Right ventricle myocardium superior (tissue), 1 donor: ENCODE measurements at regions of chr2 and their contacts with region 1.

Region 1: DNA sequence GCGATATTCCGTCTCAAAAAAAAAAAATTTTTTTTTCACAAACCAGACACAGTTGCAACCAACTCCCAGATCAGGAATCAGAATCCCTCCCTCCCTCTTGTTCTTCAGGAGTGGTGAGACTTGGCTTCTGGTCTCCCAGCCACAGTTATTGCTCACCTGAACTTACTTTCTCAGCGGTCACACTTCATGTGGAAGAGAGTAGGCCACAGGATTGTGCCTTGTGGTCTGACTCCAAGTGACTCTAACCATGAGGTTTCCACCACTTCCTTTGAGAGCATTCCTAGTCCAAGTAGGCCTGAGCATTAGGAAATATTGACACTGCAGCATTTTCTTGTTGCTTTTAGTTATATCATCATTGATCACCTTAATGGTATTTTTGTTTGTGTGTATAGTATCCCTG is 12.1 kb downstream of the FMNL2 start:
- DNase-seq: no peak
- ATAC-seq: no peak

Region 2: GRCh38 chr2:152376385-152376784 is 29.3 kb after region 1 on chr2:
- intact Hi-C with region 1: no loop called
- DNase-seq: no peak
- ATAC-seq: no peak

Region 3: GRCh38 chr2:152611458-152612231 is 264.6 kb after region 1 on chr2:
- intact Hi-C with region 1: loop called (anchors 10 kb)
- DNase-seq: peak; percentile 51
- ATAC-seq: peak; percentile 94